PC-9 (cell line): ENCODE measurements at regions of chr12 and their contacts with region 1.

Region 1: DNA sequence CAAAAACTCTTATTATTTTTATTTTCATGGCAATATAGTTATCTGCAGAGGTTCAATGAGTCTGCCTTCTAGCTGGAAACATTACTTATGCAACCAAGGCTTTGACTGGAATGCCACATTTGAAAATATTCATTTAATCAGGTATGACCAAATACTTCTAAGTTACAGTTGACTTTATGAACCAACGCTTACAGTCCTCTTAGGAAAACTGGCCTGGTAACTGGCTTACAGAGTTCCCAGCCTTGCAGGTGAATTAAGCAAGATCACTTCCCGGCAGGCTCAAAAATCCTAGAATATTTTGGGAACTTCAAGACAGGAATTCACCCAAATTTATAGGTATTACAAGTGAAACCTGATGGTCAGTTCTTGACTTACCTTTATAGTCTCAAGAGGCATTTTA is 12.3 kb downstream of the LRP6 start:
- DNase-seq: no peak
- H3K4me3 ChIP-seq: no peak overlapping the region
- H3K27ac ChIP-seq: no peak overlapping the region
- H3K4me1 ChIP-seq: no peaks in the 10 kb centered on the region
- H3K27me3 ChIP-seq: no peaks in the 10 kb centered on the region
- CTCF ChIP-seq: no peak

Region 2: GRCh38 chr12:11855983-11856374 is 398.6 kb before region 1 on chr12:
- CTCF ChIA-PET with region 1: no interaction called
- POLR2A ChIA-PET with region 1: interaction called, 14 read pairs
- intact Hi-C with region 1: no loop called
- DNase-seq: no peak
- H3K4me3 ChIP-seq: no peak overlapping the region
- H3K27ac ChIP-seq: no peak overlapping the region
- H3K4me1 ChIP-seq: peaks cover 14% of the 10 kb centered on the region
- H3K27me3 ChIP-seq: no peaks in the 10 kb centered on the region
- CTCF ChIP-seq: no peak